A673 (cell line): ENCODE measurements at regions of chr11 and their contacts with region 1.

Region 1: DNA sequence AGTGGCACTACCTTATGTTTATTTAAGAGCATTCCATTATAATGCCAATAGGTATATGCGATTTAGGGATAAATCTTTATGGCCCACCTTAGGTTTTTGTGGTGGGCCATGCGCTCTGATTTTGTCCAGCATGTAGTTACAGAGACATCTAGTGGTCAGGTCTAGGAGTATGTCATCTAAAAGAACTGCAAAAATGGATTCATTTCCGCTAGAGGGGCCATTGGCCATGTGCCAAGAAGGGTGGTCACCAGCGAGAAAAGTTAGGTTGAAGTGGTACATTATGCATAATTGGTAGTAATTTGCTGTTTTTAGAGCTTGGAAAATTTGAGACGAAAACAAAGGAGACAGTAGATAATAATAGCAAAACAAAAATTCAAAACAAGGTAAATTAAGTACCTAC is 27.7 kb downstream of the LRRC4C start:
- DNase-seq: peak; percentile 76
- H3K4me3 ChIP-seq: no peak overlapping the region
- H3K27ac ChIP-seq: no peak overlapping the region
- H3K4me1 ChIP-seq: peaks cover 13% of the 10 kb centered on the region
- H3K27me3 ChIP-seq: no peaks in the 10 kb centered on the region
- CTCF ChIP-seq: peak; percentile 94

Region 2: DNA sequence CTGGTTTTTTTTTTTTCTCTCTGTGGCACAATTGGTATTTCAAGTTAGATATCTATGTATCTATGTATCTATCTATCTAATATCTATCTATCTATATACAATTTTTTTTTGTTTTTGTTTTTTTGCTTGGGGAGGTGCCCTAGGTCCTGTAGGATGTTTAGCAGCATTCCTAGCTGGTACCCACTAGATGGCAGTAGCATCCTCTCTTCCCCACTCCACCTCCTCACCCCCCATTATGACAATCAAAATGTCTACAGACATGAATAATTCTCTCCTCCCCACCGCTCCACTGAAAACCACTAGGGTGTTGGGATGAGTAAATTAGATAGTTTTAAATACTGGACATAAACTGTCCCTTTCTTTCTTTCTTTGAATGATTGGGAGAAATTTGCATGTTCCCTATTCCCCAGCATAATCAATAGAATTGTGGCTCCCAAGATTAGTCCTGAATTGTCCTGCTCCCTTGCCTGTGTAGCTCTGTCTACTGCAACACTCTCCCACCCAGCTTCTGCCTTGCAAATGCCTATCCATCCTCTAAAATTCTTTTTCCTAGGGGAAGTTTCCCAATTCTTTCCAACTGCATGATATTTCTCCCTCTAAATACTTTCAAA is 1124.7 kb before region 1 on chr11:
- CTCF ChIA-PET with region 1: no interaction called
- POLR2A ChIA-PET with region 1: no interaction called
- intact Hi-C with region 1: loop called (anchors 1 kb)
- DNase-seq: peak; percentile 87
- H3K4me3 ChIP-seq: no peak overlapping the region
- H3K27ac ChIP-seq: no peak overlapping the region
- H3K4me1 ChIP-seq: peaks cover 9% of the 10 kb centered on the region
- H3K27me3 ChIP-seq: no peaks in the 10 kb centered on the region
- CTCF ChIP-seq: peak; percentile 99

Region 3: DNA sequence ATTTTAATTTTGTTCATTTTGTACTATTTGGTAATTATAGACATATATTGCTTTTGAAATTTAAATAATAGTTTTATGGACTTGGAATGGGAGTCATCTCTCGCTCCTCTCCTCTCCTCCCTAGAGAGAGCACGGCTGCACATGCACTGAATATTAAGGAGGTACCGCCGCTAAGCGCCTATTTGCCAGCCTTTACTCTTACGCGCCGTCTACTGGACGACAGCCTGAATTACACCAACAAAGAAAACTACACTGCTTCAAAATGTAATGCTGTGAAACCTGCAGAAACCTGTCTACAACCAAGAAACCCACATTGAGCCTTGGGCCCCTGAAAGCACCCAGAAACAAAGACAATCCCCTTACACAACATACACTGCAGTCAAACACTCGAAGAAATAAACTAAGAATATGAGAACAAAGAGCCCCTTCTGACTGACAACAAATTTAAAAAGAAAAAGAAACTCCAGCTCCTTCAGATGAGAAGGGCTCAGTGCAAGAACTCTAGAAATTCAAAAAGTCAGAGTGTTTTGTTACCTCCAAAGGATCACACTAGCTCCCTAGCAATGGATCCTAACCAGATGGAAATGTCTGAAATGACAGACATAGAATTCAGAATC is 709.5 kb before region 1 on chr11:
- CTCF ChIA-PET with region 1: no interaction called
- POLR2A ChIA-PET with region 1: no interaction called
- intact Hi-C with region 1: loop called (anchors 10 kb)
- DNase-seq: peak; percentile 89
- H3K4me3 ChIP-seq: no peak overlapping the region
- H3K27ac ChIP-seq: no peak overlapping the region
- H3K4me1 ChIP-seq: no peaks in the 10 kb centered on the region
- H3K27me3 ChIP-seq: no peaks in the 10 kb centered on the region
- CTCF ChIP-seq: peak; percentile 99